ENCODE measurements at regions of chr2 and their contacts with region 1.

Region 1: GRCh38 chr2:71510196-71510807 is 56.9 kb downstream of the DYSF start:
- DNase-seq: peak; percentile 59 to 83
- ATAC-seq: peak in 2 of 3 donors; percentile 63 to 79
- H3K4me3 ChIP-seq: no peak overlapping the region
- H3K4me3 Mint-ChIP-seq: no peak overlapping the region
- H3K27ac ChIP-seq: no peak overlapping the region
- H3K27ac Mint-ChIP-seq: no peak overlapping the region
- H3K4me1 ChIP-seq: no peaks in the 10 kb centered on the region
- H3K4me1 Mint-ChIP-seq: no peaks in the 10 kb centered on the region
- H3K27me3 ChIP-seq: no peaks in the 10 kb centered on the region
- H3K27me3 Mint-ChIP-seq: no peaks in the 10 kb centered on the region
- CTCF ChIP-seq: peak; percentile 89

Region 2: DNA sequence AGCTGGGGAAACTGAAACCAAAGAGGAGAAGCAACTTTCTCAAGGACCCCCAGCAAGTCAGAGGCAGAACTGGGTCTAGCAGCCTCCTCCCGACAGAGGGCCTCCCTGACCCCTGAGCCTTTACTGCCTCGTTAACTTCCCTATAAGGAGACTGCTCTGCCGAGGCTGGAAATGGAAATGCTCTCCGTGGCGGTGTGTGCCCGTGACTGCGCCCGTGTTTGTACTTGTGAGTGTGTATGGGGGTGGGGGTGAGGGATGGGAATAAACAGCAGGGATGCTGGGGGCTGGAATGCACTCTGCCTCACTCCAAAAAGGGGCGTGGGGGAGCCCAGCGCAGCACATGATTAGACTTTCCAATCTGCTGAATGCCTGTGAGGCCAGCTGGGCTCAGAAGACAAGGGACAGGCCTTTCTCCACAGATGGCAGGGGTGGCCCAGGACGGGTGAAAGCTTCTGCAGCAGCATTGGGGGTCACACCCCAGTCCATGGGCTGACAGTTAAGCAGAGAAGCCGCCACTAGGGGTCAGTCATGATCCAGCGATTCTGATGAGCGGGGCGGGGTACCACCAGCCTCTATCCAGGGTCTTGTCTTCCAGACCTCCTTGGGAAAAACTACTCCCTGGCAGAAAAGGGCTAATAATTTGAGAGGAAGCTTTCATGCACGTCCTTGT is 353.0 kb before region 1 on chr2:
- intact Hi-C with region 1: loop called (anchors 2 kb)
- DNase-seq: peak; percentile 21 to 74
- ATAC-seq: peak; percentile 58 to 81 (median 59)
- H3K4me3 ChIP-seq: no peak overlapping the region
- H3K4me3 Mint-ChIP-seq: no peak overlapping the region
- H3K27ac ChIP-seq: no peak overlapping the region
- H3K27ac Mint-ChIP-seq: no peak overlapping the region
- H3K4me1 ChIP-seq: peaks cover 7% of the 10 kb centered on the region
- H3K4me1 Mint-ChIP-seq: peaks cover 6 to 7% of the 10 kb centered on the region in 2 donors
- H3K27me3 ChIP-seq: peaks cover 3% of the 10 kb centered on the region
- H3K27me3 Mint-ChIP-seq: peaks cover 7 to 13% of the 10 kb centered on the region in 2 donors
- CTCF ChIP-seq: peak; percentile 44

Region 3: DNA sequence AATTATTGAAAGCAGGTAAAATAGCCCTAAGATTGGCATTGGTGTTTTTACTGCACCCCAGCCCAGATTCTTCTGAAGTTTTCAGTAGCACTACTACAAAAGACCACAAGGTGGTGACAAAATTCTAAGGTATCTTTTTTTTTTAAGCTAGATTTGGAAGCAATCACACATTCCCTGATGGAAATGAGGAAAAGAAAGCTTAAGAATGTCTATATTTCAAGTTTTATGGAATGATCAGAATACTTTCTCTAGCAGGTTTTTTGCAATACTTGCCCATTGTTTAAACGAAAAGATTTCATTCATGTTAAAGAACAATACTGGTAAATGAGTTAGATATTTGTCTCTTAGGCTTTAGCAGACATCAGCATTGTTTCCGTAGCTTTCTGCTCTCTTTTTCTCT is 210.8 kb before region 1 on chr2:
- intact Hi-C with region 1: loop called (anchors 1 kb)
- DNase-seq: peak in 1 of 2 donors; percentile 68
- ATAC-seq: no peak
- H3K4me3 ChIP-seq: no peak overlapping the region
- H3K4me3 Mint-ChIP-seq: no peak overlapping the region
- H3K27ac ChIP-seq: no peak overlapping the region
- H3K27ac Mint-ChIP-seq: no peak overlapping the region
- H3K4me1 ChIP-seq: no peaks in the 10 kb centered on the region
- H3K4me1 Mint-ChIP-seq: no peaks in the 10 kb centered on the region
- H3K27me3 ChIP-seq: no peaks in the 10 kb centered on the region
- H3K27me3 Mint-ChIP-seq: peaks cover 0 to 6% of the 10 kb centered on the region in 2 donors
- CTCF ChIP-seq: peak; percentile 91

Region 4: GRCh38 chr2:72041638-72042111 is 531.4 kb after region 1 on chr2:
- intact Hi-C with region 1: no loop called
- DNase-seq: no peak
- ATAC-seq: no peak
- H3K4me3 ChIP-seq: no peak overlapping the region
- H3K4me3 Mint-ChIP-seq: no peak overlapping the region
- H3K27ac ChIP-seq: no peak overlapping the region
- H3K27ac Mint-ChIP-seq: no peak overlapping the region
- H3K4me1 ChIP-seq: no peaks in the 10 kb centered on the region
- H3K4me1 Mint-ChIP-seq: no peaks in the 10 kb centered on the region
- H3K27me3 ChIP-seq: no peaks in the 10 kb centered on the region
- H3K27me3 Mint-ChIP-seq: no peaks in the 10 kb centered on the region
- CTCF ChIP-seq: no peak

Measured in natural killer cell (primary cell).